Sigmoid colon (tissue), 7 donors: ENCODE measurements at regions of chr3 and their contacts with region 1.

Region 1: DNA sequence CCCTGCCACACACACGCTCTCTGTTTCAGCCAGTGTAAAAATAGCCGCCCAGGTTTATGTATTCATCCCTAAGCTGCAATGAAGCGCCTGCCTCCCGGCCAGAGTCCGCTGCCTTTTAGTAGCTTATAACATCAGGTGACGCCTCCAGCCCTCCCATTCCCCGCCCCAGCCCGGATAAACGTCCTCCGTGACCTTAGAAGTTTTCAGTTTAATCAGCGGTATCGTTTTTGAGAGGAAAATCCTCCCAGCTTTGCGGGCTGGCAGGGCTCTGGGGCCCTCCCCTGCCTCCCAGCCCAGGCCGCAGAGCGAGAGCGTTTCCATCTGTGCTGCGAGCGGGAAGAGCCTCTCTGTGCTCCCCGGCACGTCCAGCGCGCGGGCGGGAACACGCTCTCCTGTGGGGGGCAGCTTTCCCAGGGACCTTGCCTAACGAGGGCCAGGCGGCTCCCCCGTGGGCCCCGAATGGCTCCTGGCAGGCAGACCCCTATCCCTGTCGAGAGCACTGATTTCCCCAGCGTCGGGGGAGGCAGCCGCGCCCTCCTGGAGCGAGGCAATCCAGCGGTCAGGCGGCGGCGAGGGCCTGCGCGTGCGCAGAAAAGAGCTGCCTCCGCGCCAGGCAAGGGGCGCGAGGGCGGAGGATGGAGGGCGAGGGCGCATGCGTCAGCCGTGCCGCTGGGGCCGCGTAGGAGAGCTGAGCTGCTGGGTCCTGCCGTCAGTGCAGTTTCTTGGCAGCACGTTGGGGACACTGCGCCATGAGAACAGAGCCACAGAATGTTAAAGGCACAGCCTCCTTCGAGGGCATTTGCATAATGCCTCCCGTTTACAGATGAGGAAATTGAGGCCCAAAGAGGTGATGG is 71.1 kb downstream of the CCNL1 start:
- DNase-seq: peak; percentile 99
- H3K4me3 ChIP-seq: peak overlapping the region; percentile 52 to 65 (median 62)
- H3K27ac ChIP-seq: peak overlapping the region; percentile 98 to 100 (median 99)
- H3K4me1 ChIP-seq: peaks cover 0 to 71% (median 59%) of the 10 kb centered on the region in 4 donors
- H3K27me3 ChIP-seq: no peaks in the 10 kb centered on the region
- CTCF ChIP-seq: no peak
- EP300 ChIP-seq: peak in 3 of 4 donors; percentile 78 to 98 (median 94)
- POLR2A ChIP-seq: peak; percentile 96

Region 2: GRCh38 chr3:156816800-156817645 is 271.8 kb before region 1 on chr3:
- intact Hi-C with region 1: loop called (anchors 5 kb)
- DNase-seq: peak; percentile 85
- H3K4me3 ChIP-seq: peak overlapping the region; percentile 55 to 65 (median 61)
- H3K27ac ChIP-seq: peak overlapping the region; percentile 74 to 85 (median 82)
- H3K4me1 ChIP-seq: peaks cover 0 to 20% (median 9%) of the 10 kb centered on the region in 4 donors
- H3K27me3 ChIP-seq: no peaks in the 10 kb centered on the region
- CTCF ChIP-seq: no peak
- EP300 ChIP-seq: peak in 3 of 4 donors; percentile 55 to 87 (median 83)
- POLR2A ChIP-seq: no peak

Region 3: GRCh38 chr3:156964577-156964976 is 124.3 kb before region 1 on chr3:
- intact Hi-C with region 1: no loop called
- DNase-seq: no peak
- H3K4me3 ChIP-seq: no peak overlapping the region
- H3K27ac ChIP-seq: no peak overlapping the region
- H3K4me1 ChIP-seq: no peaks in the 10 kb centered on the region
- H3K27me3 ChIP-seq: no peaks in the 10 kb centered on the region
- CTCF ChIP-seq: no peak
- EP300 ChIP-seq: no peak
- POLR2A ChIP-seq: no peak

Region 4: DNA sequence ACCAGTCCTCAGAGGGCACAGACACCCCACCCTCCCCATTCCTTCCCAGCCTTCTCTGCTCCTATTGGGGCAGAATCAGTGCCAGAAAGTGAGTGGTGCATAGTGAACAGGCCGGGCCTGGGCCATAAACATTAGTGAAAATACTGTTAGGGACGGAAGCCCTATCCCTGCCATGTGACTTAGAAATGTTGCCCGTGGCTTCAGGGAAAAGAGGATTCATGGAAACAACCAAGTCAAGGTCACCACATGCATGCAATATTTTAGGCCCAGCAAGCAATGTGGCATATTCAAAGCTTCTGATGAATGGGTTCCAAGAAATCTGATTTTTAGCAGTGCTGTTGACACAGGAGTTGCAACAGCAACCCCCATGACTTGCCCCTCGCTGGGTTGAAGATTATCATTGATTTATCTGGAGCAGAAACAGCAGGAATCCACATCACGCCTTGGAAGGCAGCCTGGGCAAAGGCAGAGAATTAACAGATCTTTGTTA is 18.9 kb after region 1 on chr3:
- intact Hi-C with region 1: loop called (anchors 2 kb)
- DNase-seq: no peak
- H3K4me3 ChIP-seq: no peak overlapping the region
- H3K27ac ChIP-seq: peak overlapping the region in 3 of 4 donors; percentile 71 to 83 (median 74)
- H3K4me1 ChIP-seq: peaks cover 0 to 86% (median 65%) of the 10 kb centered on the region in 4 donors
- H3K27me3 ChIP-seq: no peaks in the 10 kb centered on the region
- CTCF ChIP-seq: no peak
- EP300 ChIP-seq: peak in 3 of 4 donors; percentile 14 to 49 (median 20)
- POLR2A ChIP-seq: no peak

Region 5: GRCh38 chr3:157130467-157131251 is 41.8 kb after region 1 on chr3:
- intact Hi-C with region 1: loop called (anchors 2 kb)
- DNase-seq: peak; percentile 77
- H3K4me3 ChIP-seq: peak overlapping the region in 1 of 4 donors; percentile 4
- H3K27ac ChIP-seq: peak overlapping the region; percentile 61 to 80 (median 76)
- H3K4me1 ChIP-seq: peaks cover 0 to 50% (median 33%) of the 10 kb centered on the region in 4 donors
- H3K27me3 ChIP-seq: no peaks in the 10 kb centered on the region
- CTCF ChIP-seq: peak; percentile 26 to 72 (median 67)
- EP300 ChIP-seq: no peak
- POLR2A ChIP-seq: no peak

Region 6: DNA sequence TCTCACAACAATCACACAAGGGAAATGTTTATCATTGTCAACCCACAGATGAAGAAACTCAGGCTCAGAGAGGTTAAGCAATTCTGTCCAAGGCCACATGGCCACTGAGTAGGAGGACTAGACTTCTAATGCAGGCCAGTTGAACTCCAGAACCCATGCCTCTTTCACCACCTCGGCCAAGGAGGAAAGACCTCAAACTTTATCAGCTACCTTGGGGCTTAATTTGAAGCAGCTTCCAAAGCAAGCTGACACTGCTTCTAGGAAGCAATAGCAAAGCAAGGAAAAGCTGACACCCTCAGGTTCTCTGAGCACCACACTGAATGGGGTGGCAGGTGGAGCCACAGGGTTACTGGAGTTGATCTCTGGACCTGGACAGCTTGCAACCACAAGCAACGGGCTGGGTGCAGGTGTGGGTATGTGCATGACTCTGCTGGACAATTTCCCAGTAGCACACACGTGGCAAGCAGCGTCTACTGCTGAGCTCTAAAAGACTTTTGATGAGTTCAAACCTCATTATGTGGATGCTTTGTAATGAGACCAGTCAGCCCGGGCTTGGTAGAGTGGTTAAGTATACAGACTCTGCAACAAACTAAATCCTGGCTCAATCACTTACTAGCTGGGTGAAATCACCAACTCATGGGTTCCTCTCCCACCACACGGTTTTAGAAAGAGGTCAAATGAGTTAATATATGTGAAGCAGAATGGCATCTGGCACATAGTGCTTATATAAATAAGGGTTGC is 48.0 kb after region 1 on chr3:
- intact Hi-C with region 1: loop called (anchors 2 kb)
- DNase-seq: no peak
- H3K4me3 ChIP-seq: no peak overlapping the region
- H3K27ac ChIP-seq: peak overlapping the region; percentile 31 to 75 (median 68)
- H3K4me1 ChIP-seq: peaks cover 0 to 40% (median 21%) of the 10 kb centered on the region in 4 donors
- H3K27me3 ChIP-seq: no peaks in the 10 kb centered on the region
- CTCF ChIP-seq: no peak
- EP300 ChIP-seq: no peak
- POLR2A ChIP-seq: no peak

Region 7: DNA sequence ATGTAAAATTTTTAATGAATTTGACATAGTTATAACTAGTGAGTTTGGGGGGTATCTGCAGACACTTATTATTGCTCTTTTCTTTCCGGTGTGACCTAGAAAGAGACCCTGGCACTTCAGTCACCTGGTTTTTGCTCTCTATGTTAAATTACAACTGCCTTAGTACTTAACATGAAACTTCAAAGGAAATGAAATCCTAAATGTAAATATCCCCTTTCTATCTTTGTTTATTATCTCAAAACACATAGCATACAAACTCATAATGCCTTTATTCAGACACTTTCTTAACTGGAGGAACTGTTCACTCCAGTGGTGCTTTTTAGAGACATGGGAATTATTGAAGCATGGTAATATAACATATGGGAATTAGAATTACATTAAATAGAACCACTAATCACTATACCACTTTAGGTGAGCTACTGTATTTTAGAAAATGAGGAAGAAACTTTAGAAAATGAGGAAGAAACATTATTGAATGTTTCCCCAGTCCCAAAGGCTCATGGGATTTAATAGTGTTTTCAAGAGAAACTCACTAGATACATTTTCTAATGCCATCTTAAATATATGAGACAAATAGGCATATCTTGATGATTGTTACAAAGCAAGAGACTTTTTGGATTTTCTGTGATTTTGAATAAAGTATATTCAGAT is 1362.7 kb after region 1 on chr3:
- intact Hi-C with region 1: no loop called
- DNase-seq: no peak
- H3K4me3 ChIP-seq: no peak overlapping the region
- H3K27ac ChIP-seq: no peak overlapping the region
- H3K4me1 ChIP-seq: no peaks in the 10 kb centered on the region
- H3K27me3 ChIP-seq: no peaks in the 10 kb centered on the region
- CTCF ChIP-seq: no peak
- EP300 ChIP-seq: no peak
- POLR2A ChIP-seq: no peak